ENCODE measurements at regions of chrX and their contacts with region 1.

Region 1: GRCh38 chrX:140065961-140066662 is 100.8 kb upstream of the CXorf66 start:
- DNase-seq: no peak
- H3K4me3 ChIP-seq: no peak overlapping the region
- H3K27ac ChIP-seq: no peak overlapping the region
- H3K4me1 ChIP-seq: no peaks in the 10 kb centered on the region
- H3K27me3 ChIP-seq: no peaks in the 10 kb centered on the region
- CTCF ChIP-seq: no peak
- POLR2A ChIP-seq: no peak

Region 2: DNA sequence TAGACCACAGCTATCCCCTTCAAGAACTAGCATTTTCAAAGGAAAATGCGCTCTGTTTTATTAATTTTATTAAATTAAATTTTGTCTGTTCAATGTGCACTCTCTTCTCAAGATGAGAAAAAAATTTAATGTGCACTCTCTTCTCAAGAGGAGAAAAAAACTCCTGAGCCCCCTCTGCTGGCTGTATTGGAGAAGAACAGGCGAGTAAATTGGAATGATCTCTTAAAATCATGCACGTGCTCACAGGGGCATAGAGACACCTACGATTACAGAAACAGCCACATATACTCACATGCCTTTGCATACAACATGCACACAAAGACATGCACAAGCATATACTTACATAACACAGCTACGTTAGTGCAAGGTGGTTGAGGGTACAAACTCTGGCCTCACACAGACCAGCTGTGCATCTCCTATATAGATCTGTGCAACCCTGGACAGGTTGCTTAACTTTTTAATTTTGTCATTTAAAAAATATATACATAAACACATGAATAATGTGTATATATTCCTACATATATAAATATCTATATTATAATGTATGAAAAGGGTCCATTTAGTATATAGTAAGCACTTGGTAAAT is 75.4 kb after region 1 on chrX:
- intact Hi-C with region 1: loop called (anchors 10 kb)
- DNase-seq: peak; percentile 38
- H3K4me3 ChIP-seq: no peak overlapping the region
- H3K27ac ChIP-seq: no peak overlapping the region
- H3K4me1 ChIP-seq: no peaks in the 10 kb centered on the region
- H3K27me3 ChIP-seq: no peaks in the 10 kb centered on the region
- CTCF ChIP-seq: peak in 2 of 3 experiments; percentile 32 to 42
- POLR2A ChIP-seq: no peak